ENCODE measurements at regions of chr6 and their contacts with region 1.

Region 1: GRCh38 chr6:152184917-152185574 is 377.6 kb downstream of the ESR1 start:
- DNase-seq: peak; percentile 42
- ATAC-seq: peak; percentile 62
- H3K4me3 ChIP-seq: peak overlapping the region; percentile 24 to 75 (median 48)
- H3K4me3 Mint-ChIP-seq: peak overlapping the region; percentile 99
- H3K27ac ChIP-seq: peak overlapping the region; percentile 76 to 82
- H3K27ac Mint-ChIP-seq: peak overlapping the region; percentile 99
- H3K4me1 ChIP-seq: peaks cover 24 to 35% of the 10 kb centered on the region in 2 donors
- H3K4me1 Mint-ChIP-seq: peaks cover 62% of the 10 kb centered on the region
- H3K27me3 ChIP-seq: no peaks in the 10 kb centered on the region
- H3K27me3 Mint-ChIP-seq: no peaks in the 10 kb centered on the region
- CTCF ChIP-seq: no peak

Region 2: DNA sequence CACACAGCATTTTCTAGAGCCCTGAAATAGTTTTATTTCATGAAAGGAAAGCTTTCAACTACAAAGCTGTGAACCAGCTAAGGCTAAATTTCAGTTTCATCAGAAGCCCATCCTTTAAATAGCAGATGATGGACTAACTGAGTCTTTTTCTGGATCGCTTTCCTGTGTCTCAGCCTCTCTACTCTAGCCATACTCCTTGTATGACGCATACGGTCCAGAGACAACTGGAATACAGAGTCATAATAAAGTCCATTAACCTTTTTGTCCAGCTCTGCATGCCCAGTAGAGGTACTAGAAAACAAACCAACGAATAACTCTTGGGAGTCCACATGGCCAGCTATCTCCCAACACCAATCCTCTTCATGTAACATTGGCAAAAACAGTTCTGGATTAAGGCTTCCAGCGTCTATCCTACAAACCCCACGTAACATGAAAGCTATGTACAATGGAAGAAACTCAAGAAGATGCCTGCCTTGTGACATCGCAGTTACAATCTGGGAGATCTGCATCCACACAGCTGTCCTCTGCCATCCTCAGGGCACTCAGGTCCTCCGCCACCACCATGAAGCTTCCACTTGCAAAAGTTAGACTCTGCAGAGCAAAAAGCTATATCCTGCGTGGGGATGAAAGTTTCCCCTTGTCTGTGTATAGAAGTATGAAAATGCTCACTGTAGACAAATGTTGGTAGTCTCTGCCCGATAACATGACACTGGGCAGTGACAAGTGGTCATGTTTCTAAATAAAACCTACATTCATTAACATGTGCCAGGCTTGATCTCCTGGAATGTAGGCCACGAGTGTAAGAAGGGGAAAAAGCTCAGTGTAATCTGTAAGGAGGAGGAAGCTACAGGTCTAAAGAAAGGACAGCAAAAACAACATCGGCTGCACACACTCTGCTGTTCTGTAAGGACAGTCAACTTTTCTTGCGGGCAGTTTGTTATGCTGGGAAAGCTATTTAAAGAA is 17.1 kb before region 1 on chr6:
- CTCF ChIA-PET with region 1: interaction called, 6 read pairs
- POLR2A ChIA-PET with region 1: interaction called, 4 read pairs
- intact Hi-C with region 1: loop called (anchors 2 kb)
- DNase-seq: peak; percentile 19
- ATAC-seq: no peak
- H3K4me3 ChIP-seq: no peak overlapping the region
- H3K4me3 Mint-ChIP-seq: peak overlapping the region; percentile 67
- H3K27ac ChIP-seq: peak overlapping the region in 1 of 2 donors; percentile 44
- H3K27ac Mint-ChIP-seq: peak overlapping the region; percentile 81
- H3K4me1 ChIP-seq: peaks cover 0 to 5% of the 10 kb centered on the region in 2 donors
- H3K4me1 Mint-ChIP-seq: peaks cover 31% of the 10 kb centered on the region
- H3K27me3 ChIP-seq: no peaks in the 10 kb centered on the region
- H3K27me3 Mint-ChIP-seq: no peaks in the 10 kb centered on the region
- CTCF ChIP-seq: no peak